OCI-LY7 (cell line): ENCODE measurements at regions of chr17 and their contacts with region 1.

Region 1: GRCh38 chr17:67068999-67069398 is 24.6 kb downstream of the CACNG1 start:
- DNase-seq: no peak
- H3K4me3 ChIP-seq: no peak overlapping the region
- H3K27ac ChIP-seq: no peak overlapping the region
- H3K4me1 ChIP-seq: no peaks in the 10 kb centered on the region
- CTCF ChIP-seq: no peak

Region 2: DNA sequence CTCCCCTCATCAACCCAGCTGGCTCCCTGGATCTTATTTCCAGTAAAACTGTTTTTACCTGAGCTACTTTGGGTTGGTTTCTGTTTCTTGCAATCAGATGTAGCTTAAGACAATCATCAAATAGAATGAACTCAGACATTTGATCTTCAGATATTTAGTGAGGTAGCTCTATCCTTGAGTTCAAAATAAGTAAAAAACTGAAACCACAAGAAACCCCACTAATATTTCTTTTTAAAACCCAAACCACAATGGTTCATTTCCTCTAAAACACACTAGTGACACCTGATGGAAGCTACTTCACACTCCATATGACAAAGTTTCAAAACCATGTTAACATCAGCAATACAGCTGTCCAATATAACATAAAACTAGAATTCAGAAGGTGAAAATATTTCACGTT is 13.1 kb after region 1 on chr17:
- CTCF ChIA-PET with region 1: no interaction called
- POLR2A ChIA-PET with region 1: interaction called, 14 read pairs
- intact Hi-C with region 1: no loop called
- DNase-seq: peak; percentile 62
- H3K4me3 ChIP-seq: peak overlapping the region; percentile 9
- H3K27ac ChIP-seq: peak overlapping the region; percentile 51
- H3K4me1 ChIP-seq: peaks cover 33% of the 10 kb centered on the region
- CTCF ChIP-seq: peak; percentile 72

Region 3: GRCh38 chr17:67107811-67108775 is 39.1 kb after region 1 on chr17:
- CTCF ChIA-PET with region 1: no interaction called
- POLR2A ChIA-PET with region 1: no interaction called
- intact Hi-C with region 1: no loop called
- DNase-seq: no peak
- H3K4me3 ChIP-seq: no peak overlapping the region
- H3K27ac ChIP-seq: no peak overlapping the region
- H3K4me1 ChIP-seq: no peaks in the 10 kb centered on the region
- CTCF ChIP-seq: no peak